ENCODE measurements at regions of chr11 and their contacts with region 1.

Region 1: DNA sequence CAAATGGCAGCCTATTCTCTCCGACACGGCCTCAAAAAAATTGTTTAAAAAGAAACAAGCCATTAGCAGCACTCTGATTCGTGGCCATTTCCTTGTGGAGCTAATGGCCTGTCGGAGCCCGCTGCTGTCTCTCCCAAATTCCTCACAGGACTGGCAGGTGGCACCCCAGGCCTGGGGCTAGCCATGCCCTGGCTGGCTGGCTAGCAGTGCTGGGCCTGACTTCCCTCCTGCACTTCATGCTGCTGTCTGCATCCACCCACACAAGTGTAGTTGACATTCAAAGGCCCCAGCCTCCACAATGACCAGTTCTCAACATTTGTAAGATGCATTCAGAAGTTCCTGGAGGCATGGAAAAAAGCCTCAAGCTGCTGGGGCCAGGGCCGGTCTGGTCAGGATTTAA is 61.5 kb downstream of the SMCO4 start:
- DNase-seq: no peak

Region 2: GRCh38 chr11:93529707-93530467 is 48.2 kb after region 1 on chr11:
- intact Hi-C with region 1: loop called (anchors 5 kb)
- DNase-seq: no peak

Region 3: DNA sequence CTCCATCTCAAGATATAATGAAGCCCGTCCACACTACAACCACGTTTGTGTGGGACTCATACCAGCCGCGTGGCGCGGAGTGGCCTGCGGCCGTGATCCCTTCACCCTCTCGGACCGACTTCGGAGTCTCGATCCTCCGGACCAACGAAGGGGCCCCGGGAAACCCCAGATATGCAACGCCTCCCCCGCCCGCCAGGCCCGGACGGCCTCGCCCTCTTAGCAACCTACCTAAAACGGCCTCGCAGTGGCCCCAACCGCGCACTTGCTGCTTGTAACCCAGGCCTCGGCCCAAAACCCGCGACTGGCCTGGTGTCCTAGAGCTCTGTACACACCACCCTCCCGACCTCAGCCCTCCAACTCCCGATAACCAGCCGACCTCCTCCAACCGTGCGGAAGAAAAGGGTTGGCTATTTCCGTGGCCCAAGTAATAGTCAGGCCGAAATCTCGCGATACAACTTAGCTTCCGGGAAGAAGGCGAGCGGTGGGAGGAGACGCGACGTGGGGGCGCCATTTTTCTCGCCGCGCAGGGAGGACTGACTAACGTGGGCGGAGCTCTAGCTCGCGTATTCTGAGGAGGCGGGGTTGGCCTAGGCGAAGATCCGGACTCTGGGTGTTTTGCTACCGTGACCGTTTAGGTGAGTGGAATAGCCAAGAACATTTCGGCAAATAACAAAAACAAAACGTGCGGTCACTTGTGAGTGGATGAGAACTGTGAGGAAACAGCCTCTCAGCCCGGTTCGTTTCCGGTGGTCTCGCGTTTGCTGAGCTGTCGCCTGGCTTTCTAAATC is 259.6 kb after region 1 on chr11 and contains the starts of genes C11orf54 and TAF1D:
- intact Hi-C with region 1: no loop called
- DNase-seq: peak; percentile 98
- total RNA-seq, gene C11orf54: 19.9 TPM
- total RNA-seq, gene TAF1D: 41.1 TPM

Measured in cardiac septum (tissue), 1 donor.